HepG2 (cell line): ENCODE measurements at regions of chr3 and their contacts with region 1.

Region 1: DNA sequence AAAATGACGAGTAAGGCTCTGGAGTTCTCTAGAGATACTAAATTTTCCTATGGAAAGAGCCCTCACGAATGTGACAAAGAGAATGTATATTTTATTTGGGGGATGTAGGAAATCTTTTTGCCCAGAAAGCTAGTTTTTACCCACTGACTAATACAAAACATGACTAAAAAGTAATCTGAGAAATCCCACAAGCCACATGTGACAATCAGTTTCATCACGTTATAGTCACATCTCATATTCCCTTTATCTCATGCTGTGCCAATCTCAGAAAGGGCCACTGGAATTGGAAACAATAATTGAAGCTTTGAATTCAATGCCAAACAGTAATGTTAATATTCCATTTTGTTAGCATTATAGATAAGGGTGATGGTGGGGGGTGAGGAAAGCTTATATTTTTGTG is 509.0 kb upstream of the GOLIM4 start:
- DNase-seq: no peak
- ATAC-seq: no peak
- H3K4me3 ChIP-seq: no peak overlapping the region
- H3K27ac ChIP-seq: no peak overlapping the region
- H3K4me1 ChIP-seq: no peaks in the 10 kb centered on the region
- H3K27me3 ChIP-seq: no peaks in the 10 kb centered on the region
- CTCF ChIP-seq: no peak
- EP300 ChIP-seq: no peak
- POLR2A ChIP-seq: no peak
- RAD21 ChIP-seq: no peak

Region 2: DNA sequence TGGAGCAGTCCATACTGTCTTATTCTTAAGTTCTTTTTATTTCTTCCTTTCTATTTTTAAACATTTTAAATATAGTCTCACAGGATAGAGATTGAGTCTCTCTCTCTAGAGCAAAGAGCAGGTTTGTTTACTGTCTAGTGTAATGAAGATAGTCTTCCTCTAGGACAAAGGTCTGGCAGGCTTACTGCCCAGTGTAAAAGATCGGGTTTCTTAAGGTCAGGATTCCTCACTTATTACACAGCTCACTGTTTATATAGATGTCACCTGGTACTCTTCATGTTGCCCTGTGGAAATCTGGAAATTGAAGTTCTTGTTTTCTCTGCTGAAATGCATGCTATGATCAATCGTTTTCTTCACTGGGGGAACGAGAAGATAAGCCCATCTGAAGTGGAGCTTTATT is 1300.7 kb before region 1 on chr3:
- CTCF ChIA-PET with region 1: no interaction called
- POLR2A ChIA-PET with region 1: no interaction called
- in situ Hi-C with region 1: no loop called
- intact Hi-C with region 1: loop called (anchors 10 kb)
- DNase-seq: peak; percentile 18
- ATAC-seq: peak; percentile 98
- H3K4me3 ChIP-seq: no peak overlapping the region
- H3K27ac ChIP-seq: no peak overlapping the region
- H3K4me1 ChIP-seq: peaks cover 13% of the 10 kb centered on the region; the same call in 1 of the 2 replicates
- H3K27me3 ChIP-seq: no peaks in the 10 kb centered on the region
- CTCF ChIP-seq: no peak
- EP300 ChIP-seq: 0 out of 4 replicates have a peak, but pooled peaks of 1 of the 2 experiments have one; percentile 25
- POLR2A ChIP-seq: no peak
- RAD21 ChIP-seq: no peak

Region 3: DNA sequence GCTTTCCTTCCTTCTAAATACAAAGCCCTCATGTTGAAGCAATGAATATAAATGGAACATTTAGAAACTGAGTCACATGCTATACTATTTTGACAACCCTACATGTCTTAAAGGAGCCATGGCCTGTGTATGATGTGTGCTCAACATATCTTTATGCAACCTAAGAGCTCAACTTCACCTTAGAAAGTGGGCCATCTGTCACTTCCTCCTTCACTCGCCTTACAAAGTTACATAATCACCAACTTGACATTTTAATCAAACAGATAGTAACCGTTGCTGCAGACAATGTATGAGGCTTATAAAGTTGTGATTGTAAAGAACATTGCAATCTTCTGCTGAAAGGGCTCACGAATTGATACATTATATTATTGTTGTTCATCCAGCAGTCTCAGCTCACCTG is 705.7 kb before region 1 on chr3:
- CTCF ChIA-PET with region 1: no interaction called
- POLR2A ChIA-PET with region 1: no interaction called
- in situ Hi-C with region 1: no loop called
- intact Hi-C with region 1: no loop called
- DNase-seq: no peak
- ATAC-seq: no peak
- H3K4me3 ChIP-seq: no peak overlapping the region
- H3K27ac ChIP-seq: no peak overlapping the region
- H3K4me1 ChIP-seq: no peaks in the 10 kb centered on the region
- H3K27me3 ChIP-seq: no peaks in the 10 kb centered on the region
- CTCF ChIP-seq: no peak
- EP300 ChIP-seq: no peak
- POLR2A ChIP-seq: no peak
- RAD21 ChIP-seq: no peak